ENCODE measurements at regions of chr13 and their contacts with region 1.

Region 1: GRCh38 chr13:49110122-49110912 is 109.8 kb upstream of the MLNR start:
- DNase-seq: peak; percentile 26 to 94 (median 76)
- ATAC-seq: peak; percentile 73
- H3K4me3 ChIP-seq: peak overlapping the region; percentile 62 to 78
- H3K4me3 Mint-ChIP-seq: peak overlapping the region; percentile 87
- H3K27ac ChIP-seq: peak overlapping the region; percentile 56 to 65
- H3K27ac Mint-ChIP-seq: peak overlapping the region; percentile 85
- H3K4me1 ChIP-seq: peaks cover 42% of the 10 kb centered on the region
- H3K4me1 Mint-ChIP-seq: peaks cover 49% of the 10 kb centered on the region
- H3K27me3 ChIP-seq: no peaks in the 10 kb centered on the region
- H3K27me3 Mint-ChIP-seq: no peaks in the 10 kb centered on the region
- CTCF ChIP-seq: no peak

Region 2: GRCh38 chr13:49146950-49147355 is 36.6 kb after region 1 on chr13:
- CTCF ChIA-PET with region 1: no interaction called
- POLR2A ChIA-PET with region 1: no interaction called
- intact Hi-C with region 1: loop called in 1 of 2 experiments (anchors 5 kb)
- DNase-seq: peak in 2 of 9 experiments; percentile 60 to 78
- ATAC-seq: peak; percentile 84
- H3K4me3 ChIP-seq: peak overlapping the region; percentile 41
- H3K4me3 Mint-ChIP-seq: peak overlapping the region; percentile 83
- H3K27ac ChIP-seq: peak overlapping the region; percentile 45 to 73
- H3K27ac Mint-ChIP-seq: peak overlapping the region; percentile 96
- H3K4me1 ChIP-seq: peaks cover 17% of the 10 kb centered on the region
- H3K4me1 Mint-ChIP-seq: peaks cover 44% of the 10 kb centered on the region
- H3K27me3 ChIP-seq: no peaks in the 10 kb centered on the region
- H3K27me3 Mint-ChIP-seq: no peaks in the 10 kb centered on the region
- CTCF ChIP-seq: no peak

Region 3: DNA sequence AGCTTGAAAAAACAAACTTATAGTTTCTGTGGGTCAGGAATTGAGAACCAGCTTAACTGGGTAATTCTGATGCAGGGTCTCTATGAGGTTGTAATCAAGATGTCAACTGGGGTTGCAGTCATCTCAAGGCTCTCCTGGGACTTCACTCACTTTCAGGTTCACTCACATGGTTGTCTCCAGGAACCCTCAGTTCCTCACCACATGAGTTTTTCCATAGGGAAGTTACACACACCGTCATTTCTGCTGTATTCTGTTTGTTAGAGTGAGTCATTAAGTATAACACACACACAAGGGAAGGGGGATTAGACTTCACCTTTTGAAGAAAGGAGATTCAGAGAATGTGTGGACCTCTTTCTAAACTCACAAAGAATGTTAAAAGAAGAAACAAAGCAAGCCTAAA is 74.9 kb after region 1 on chr13:
- CTCF ChIA-PET with region 1: no interaction called
- POLR2A ChIA-PET with region 1: no interaction called
- intact Hi-C with region 1: loop called in 1 of 2 experiments (anchors 5 kb)
- DNase-seq: no peak
- ATAC-seq: no peak
- H3K4me3 ChIP-seq: no peak overlapping the region
- H3K4me3 Mint-ChIP-seq: no peak overlapping the region
- H3K27ac ChIP-seq: no peak overlapping the region
- H3K27ac Mint-ChIP-seq: no peak overlapping the region
- H3K4me1 ChIP-seq: no peaks in the 10 kb centered on the region
- H3K4me1 Mint-ChIP-seq: peaks cover 2% of the 10 kb centered on the region
- H3K27me3 ChIP-seq: no peaks in the 10 kb centered on the region
- H3K27me3 Mint-ChIP-seq: no peaks in the 10 kb centered on the region
- CTCF ChIP-seq: no peak

Region 4: DNA sequence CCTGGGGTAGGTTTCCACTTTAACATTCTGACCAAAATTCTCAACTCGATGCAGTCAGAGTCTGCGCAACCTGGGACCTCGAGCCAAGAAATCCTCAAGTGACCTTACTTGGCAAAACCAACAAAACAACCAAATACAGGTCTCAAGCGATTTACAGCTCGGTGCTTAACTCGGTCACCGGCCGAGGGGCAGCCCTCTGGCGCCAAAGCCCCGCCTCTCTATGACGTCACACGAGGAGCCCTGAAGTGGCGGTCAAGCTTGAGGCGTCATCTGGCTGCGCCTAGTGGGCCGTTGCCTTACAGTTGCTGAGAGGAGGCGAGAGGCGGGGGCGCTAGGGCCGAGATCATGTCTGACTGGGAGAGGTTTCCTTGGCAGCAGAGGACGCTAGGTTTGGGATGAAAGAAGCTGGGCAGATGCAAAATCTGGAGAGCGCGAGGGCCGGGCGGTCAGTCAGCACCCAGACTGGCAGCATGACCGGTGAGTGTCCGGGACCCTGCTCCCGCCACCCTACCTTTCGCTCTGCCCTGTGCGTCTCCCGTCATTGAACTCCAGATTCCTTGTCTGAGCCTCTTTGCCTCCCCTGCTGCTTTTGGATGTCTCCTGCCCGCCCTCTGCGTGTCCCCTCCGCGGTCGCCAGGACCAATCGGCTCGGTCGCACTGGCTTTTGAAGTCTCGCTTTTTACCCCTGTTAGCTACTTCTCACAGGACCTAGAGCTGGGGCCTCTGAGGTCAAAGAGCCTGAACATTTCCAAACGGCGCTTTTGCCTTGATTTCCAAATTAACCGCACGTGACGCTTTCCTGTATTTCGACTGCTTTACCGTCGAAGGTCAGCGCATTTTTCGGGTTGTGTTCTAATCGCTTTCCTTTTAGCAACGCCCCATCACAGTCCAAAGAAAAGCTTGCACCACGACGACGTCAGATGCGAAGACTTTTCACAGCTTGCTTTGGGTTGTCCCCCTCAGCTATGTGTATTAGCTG is 137.6 kb after region 1 on chr13 and contains the start of gene CDADC1:
- CTCF ChIA-PET with region 1: no interaction called
- POLR2A ChIA-PET with region 1: no interaction called
- intact Hi-C with region 1: loop called in 1 of 2 experiments (anchors 2 kb)
- DNase-seq: peak; percentile 73 to 93 (median 87)
- ATAC-seq: peak; percentile 74
- H3K4me3 ChIP-seq: peak within 1 kb of the TSS; percentile 83 to 99
- H3K4me3 Mint-ChIP-seq: peak within 1 kb of the TSS; percentile 92
- H3K27ac ChIP-seq: peak within 1 kb of the TSS; percentile 80 to 93
- H3K27ac Mint-ChIP-seq: peak within 1 kb of the TSS; percentile 90
- H3K4me1 ChIP-seq: peaks cover 8% of the 10 kb centered on the region
- H3K4me1 Mint-ChIP-seq: peaks cover 54% of the 10 kb centered on the region
- H3K27me3 ChIP-seq: no peaks in the 10 kb centered on the region
- H3K27me3 Mint-ChIP-seq: no peaks in the 10 kb centered on the region
- CTCF ChIP-seq: no peak
- total RNA-seq, gene CDADC1: 15.9 to 17.2 TPM

Region 5: GRCh38 chr13:49585220-49586157 is 475.2 kb after region 1 on chr13 and contains the start of gene RCBTB1:
- CTCF ChIA-PET with region 1: no interaction called
- POLR2A ChIA-PET with region 1: no interaction called
- intact Hi-C with region 1: loop called in 1 of 2 experiments (anchors 10 kb)
- DNase-seq: peak; percentile 33 to 88 (median 68)
- ATAC-seq: peak; percentile 88
- H3K4me3 ChIP-seq: peak within 1 kb of the TSS; percentile 89 to 97
- H3K4me3 Mint-ChIP-seq: peak within 1 kb of the TSS; percentile 90
- H3K27ac ChIP-seq: peak within 1 kb of the TSS; percentile 71 to 86
- H3K27ac Mint-ChIP-seq: peak within 1 kb of the TSS; percentile 92
- H3K4me1 ChIP-seq: peaks cover 9% of the 10 kb centered on the region
- H3K4me1 Mint-ChIP-seq: peaks cover 36% of the 10 kb centered on the region
- H3K27me3 ChIP-seq: no peaks in the 10 kb centered on the region
- H3K27me3 Mint-ChIP-seq: no peaks in the 10 kb centered on the region
- CTCF ChIP-seq: no peak
- total RNA-seq, gene RCBTB1: 12.1 to 14.2 TPM

Region 6: GRCh38 chr13:49936085-49936940 is 826.0 kb after region 1 on chr13 and contains the start of gene SPRYD7:
- CTCF ChIA-PET with region 1: no interaction called
- POLR2A ChIA-PET with region 1: no interaction called
- intact Hi-C with region 1: loop called in 1 of 2 experiments (anchors 10 kb)
- DNase-seq: peak; percentile 82 to 97 (median 94)
- ATAC-seq: peak; percentile 85
- H3K4me3 ChIP-seq: peak within 1 kb of the TSS; percentile 81 to 98
- H3K4me3 Mint-ChIP-seq: peak within 1 kb of the TSS; percentile 88
- H3K27ac ChIP-seq: peak within 1 kb of the TSS; percentile 37 to 44
- H3K27ac Mint-ChIP-seq: peak within 1 kb of the TSS; percentile 81
- H3K4me1 ChIP-seq: peaks cover 14% of the 10 kb centered on the region
- H3K4me1 Mint-ChIP-seq: peaks cover 19% of the 10 kb centered on the region
- H3K27me3 ChIP-seq: no peaks in the 10 kb centered on the region
- H3K27me3 Mint-ChIP-seq: no peaks in the 10 kb centered on the region
- CTCF ChIP-seq: peak; percentile 62
- total RNA-seq, gene SPRYD7: 1.2 to 1.4 TPM

Measured in CD8-positive, alpha-beta T cell (primary cell).